Activated naive CD4-positive, alpha-beta T cell treated with anti-CD3 and anti-CD28 coated beads, Interleukin-2, amount 10 ng/mL, durations not matched to agents 7 days and 5 days (primary cell): ENCODE measurements at regions of chr1 and their contacts with region 1.

Region 1: DNA sequence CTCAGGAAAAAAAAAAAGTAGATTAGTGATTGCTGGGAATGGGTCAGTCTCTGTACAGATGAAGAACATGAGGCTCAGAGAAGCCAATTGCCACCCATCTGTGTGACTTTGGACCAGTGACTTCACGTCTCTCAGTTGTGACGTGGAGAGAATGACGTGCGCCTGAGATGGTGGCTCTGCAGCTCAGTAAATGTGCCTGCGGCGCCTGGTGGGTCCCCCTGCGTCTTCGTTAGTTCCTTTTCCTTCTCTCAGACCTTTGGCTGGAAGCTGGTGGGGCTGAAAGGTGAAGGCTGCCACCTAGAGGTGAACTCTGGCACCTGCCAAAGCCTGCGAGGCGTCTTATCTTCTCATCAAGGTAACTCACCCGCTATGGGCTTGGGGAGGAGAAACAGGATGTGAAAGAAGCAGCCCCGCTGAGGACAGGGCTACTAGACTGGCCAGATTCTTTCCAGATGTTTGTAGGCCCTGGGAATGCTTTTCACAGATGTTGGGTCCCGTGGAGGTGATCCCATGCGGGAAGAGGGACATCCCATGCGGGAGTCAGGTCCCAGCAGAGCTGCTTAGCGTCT is 8.7 kb upstream of the E2F2 start:
- DNase-seq: peak; percentile 96
- H3K4me3 Mint-ChIP-seq: no peak overlapping the region
- H3K27ac Mint-ChIP-seq: peak overlapping the region; percentile 63
- H3K4me1 Mint-ChIP-seq: peaks cover 28% of the 10 kb centered on the region
- H3K27me3 Mint-ChIP-seq: peaks cover 4% of the 10 kb centered on the region

Region 2: DNA sequence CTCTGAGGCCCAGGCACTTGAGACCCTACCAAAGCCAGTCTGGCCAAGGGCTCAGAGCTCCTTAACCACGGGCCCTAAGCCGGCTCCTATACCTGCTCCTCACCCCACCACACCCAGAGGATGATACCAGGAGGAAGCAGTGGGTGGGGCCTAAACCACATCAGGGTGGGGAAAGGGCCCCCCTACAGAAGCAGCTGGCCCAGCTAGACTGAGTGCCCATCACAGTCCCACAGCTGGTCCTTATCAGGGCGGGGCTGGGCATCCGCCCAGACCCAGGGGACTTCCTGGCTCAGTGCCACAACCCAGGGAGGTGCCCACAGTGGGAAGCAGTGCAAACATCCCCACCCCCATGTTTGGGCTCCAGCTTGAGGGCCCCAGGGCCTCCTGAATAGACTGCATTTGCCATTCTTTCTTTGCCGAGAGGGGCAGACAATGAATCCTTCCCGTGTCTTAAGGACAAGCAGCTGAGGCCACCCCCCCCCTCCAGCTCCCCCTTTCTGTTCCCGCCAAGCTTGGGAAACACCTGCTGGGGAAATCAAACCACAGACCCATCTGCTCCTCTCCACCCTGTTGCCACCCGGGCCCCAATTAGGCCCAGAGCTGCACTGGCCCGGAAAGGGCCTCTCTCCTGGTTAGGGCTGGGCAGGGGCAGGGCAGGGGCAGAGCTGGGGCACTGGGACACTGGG is 14.9 kb before region 1 on chr1:
- CTCF ChIA-PET with region 1: interaction called, 31 read pairs
- DNase-seq: peak; percentile 73
- H3K4me3 Mint-ChIP-seq: peak overlapping the region; percentile 66
- H3K27ac Mint-ChIP-seq: peak overlapping the region; percentile 96
- H3K4me1 Mint-ChIP-seq: peaks cover 78% of the 10 kb centered on the region
- H3K27me3 Mint-ChIP-seq: no peaks in the 10 kb centered on the region

Region 3: GRCh38 chr1:23643736-23644554 is 104.2 kb after region 1 on chr1:
- CTCF ChIA-PET with region 1: interaction called, 715 read pairs
- DNase-seq: no peak
- H3K4me3 Mint-ChIP-seq: no peak overlapping the region
- H3K27ac Mint-ChIP-seq: no peak overlapping the region
- H3K4me1 Mint-ChIP-seq: no peaks in the 10 kb centered on the region
- H3K27me3 Mint-ChIP-seq: peaks cover 25% of the 10 kb centered on the region

Region 4: DNA sequence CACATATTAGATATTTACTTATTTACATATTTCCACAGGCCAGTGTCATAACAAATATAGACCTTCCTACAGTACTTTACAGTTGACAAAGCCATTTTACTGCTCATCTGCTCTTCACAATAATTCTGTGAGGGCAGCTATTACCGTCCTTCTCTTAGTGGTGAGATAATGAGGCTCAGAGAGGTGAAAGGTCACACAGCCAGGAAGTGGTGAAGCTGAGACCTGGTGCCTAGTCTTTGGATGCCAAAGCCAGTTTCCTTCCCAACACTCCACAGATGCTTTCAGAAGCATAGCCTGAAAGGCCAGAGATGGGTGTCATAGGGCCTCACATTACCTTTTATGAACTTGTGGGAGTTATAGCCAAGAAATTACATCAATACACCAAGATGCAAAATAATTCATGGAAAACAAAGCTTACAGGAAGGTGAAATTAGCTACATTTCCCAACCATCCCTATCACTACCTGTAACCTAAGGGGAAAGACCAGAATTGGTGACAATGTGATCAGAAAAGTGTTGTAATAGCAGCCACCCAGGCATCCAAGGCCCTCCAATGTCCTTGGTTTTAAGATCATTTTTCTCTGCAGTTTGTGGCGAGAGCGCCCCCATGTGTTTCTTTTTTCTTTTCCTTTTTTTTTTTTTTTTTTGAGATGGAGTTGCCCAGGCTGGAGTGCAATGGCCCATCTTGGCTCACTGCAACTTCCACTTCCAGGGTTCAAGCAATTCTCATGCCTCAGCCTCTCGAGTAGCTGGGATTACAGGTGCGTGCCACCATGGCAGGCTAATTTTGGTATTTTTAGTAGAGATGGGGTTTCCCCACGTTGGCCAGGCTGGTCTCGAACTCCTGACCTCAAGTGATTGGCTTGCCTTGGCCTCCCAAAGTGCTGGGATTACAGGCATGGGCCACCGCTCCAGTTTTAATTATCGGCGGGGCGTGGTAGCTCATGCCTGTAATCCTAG is 125.3 kb after region 1 on chr1:
- CTCF ChIA-PET with region 1: interaction called, 16 read pairs
- DNase-seq: peak; percentile 29
- H3K4me3 Mint-ChIP-seq: no peak overlapping the region
- H3K27ac Mint-ChIP-seq: no peak overlapping the region
- H3K4me1 Mint-ChIP-seq: peaks cover 10% of the 10 kb centered on the region
- H3K27me3 Mint-ChIP-seq: no peaks in the 10 kb centered on the region